GM10248 (cell line): ENCODE measurements at regions of chr10 and their contacts with region 1.

Region 1: GRCh38 chr10:133308421-133309110 is at the starts of genes TUBGCP2 and ZNF511:
- DNase-seq: peak; percentile 90
- CTCF ChIP-seq: no peak

Region 2: GRCh38 chr10:133239990-133240389 is 68.6 kb before region 1 on chr10:
- CTCF ChIA-PET with region 1: no interaction called
- POLR2A ChIA-PET with region 1: no interaction called
- DNase-seq: no peak
- CTCF ChIP-seq: no peak

Region 3: DNA sequence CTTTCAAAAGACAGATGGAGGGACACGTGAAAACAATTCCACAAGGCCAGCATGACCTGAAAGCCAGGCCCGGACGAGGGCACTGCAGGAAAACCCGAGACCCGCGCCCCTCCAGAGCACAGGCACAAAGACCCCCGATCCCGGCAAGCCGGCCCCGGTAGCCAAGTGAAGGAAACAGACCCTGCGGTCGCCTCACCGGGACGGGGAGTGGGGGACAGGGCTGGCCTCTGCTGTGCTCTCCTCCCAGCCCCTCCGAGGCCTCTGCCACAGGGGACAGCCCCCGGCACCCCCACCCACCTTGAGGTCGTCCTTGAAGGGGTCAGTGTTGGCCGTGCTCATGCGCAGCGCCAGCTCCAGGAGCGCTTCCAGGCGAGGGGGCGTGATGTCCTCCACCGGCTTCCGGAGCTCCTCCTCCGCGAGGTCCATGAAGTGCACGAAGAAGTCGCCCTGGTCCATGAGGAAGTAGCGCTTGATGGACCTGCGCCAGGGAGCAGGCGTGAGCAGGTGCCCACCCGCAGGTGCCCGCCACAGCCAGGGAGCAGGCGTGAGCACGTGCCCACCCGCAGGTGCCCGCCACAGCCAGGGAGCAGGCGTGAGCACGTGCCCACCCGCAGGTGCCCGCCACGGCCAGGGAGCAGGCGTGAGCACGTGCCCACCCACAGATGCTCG is 20.6 kb before region 1 on chr10:
- CTCF ChIA-PET with region 1: interaction called, 28 read pairs
- POLR2A ChIA-PET with region 1: no interaction called
- DNase-seq: no peak
- CTCF ChIP-seq: no peak

Region 4: DNA sequence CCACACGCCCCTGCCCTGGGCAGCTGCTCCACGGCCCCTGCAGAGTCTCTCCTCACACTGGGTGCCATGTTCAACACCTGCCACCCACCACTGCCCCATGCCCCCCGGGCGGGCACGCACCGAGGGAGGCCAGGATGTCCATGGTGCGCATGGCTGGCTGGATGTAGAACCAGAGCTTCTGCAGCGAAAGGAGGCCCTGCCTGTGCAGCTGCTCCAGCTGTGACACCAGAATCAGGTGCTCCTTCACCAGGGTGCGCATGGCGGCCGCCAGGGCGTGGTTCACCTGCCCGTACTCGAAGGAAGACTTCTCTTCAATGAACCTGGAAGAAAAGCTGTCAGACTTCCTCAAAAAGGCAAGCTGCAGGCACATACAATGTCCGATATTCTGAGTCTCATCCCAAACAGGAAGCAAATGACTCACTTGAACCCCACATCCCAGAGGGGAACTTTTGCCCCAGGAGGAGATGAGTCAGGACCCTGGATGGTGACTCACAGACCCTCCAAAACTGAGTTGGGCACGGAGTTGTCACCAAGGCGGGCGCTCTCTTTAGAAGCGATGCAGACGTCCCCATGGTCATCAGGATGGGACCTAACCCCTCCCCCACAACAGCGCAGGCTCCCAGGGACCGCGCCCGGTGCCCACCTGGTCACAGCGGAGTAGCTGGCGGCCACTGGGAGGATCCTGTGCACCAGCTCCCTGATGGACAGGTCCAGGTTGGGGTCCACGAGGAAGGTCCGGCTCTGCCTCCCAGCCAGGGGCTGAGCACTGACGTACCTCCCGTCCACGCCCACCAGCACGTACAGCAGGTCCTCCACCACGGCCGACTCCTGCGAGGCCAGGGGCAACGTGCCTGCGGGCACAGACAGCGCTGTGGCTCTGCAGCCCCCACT is 15.4 kb before region 1 on chr10:
- CTCF ChIA-PET with region 1: interaction called, 14 read pairs
- POLR2A ChIA-PET with region 1: no interaction called
- DNase-seq: no peak
- CTCF ChIP-seq: no peak